ENCODE measurements at regions of chr12 and their contacts with region 1.

Region 1: GRCh38 chr12:105053116-105053572 is 31.1 kb downstream of the ALDH1L2 start:
- DNase-seq: peak; percentile 71 to 77 (median 75)
- H3K4me3 ChIP-seq: no peak overlapping the region
- H3K4me3 Mint-ChIP-seq: no peak overlapping the region
- H3K27ac ChIP-seq: no peak overlapping the region
- H3K27ac Mint-ChIP-seq: no peak overlapping the region
- H3K4me1 ChIP-seq: no peaks in the 10 kb centered on the region
- H3K4me1 Mint-ChIP-seq: peaks cover 0 to 3% (median under 1%) of the 10 kb centered on the region in 4 donors
- H3K27me3 ChIP-seq: no peaks in the 10 kb centered on the region
- H3K27me3 Mint-ChIP-seq: peaks cover 2 to 3% of the 10 kb centered on the region in 2 donors

Region 2: GRCh38 chr12:104215638-104216297 is 837.4 kb before region 1 on chr12 and contains the start of gene TXNRD1:
- CTCF ChIA-PET with region 1: interaction called, 3 read pairs
- POLR2A ChIA-PET with region 1: no interaction called
- intact Hi-C with region 1: loop called (anchors 2 kb)
- DNase-seq: peak; percentile 78 to 84 (median 82)
- H3K4me3 ChIP-seq: peak within 1 kb of the TSS in 1 of 2 donors; percentile 62
- H3K4me3 Mint-ChIP-seq: peak within 1 kb of the TSS; percentile 73 to 92 (median 86)
- H3K27ac ChIP-seq: peak within 1 kb of the TSS; percentile 57
- H3K27ac Mint-ChIP-seq: peak within 1 kb of the TSS; percentile 2 to 93 (median 84)
- H3K4me1 ChIP-seq: peaks cover 29% of the 10 kb centered on the region
- H3K4me1 Mint-ChIP-seq: peaks cover 18 to 38% (median 27%) of the 10 kb centered on the region in 4 donors
- H3K27me3 ChIP-seq: no peaks in the 10 kb centered on the region
- H3K27me3 Mint-ChIP-seq: no peaks in the 10 kb centered on the region
- total RNA-seq, gene TXNRD1: 57.6 to 64.5 TPM

Region 3: DNA sequence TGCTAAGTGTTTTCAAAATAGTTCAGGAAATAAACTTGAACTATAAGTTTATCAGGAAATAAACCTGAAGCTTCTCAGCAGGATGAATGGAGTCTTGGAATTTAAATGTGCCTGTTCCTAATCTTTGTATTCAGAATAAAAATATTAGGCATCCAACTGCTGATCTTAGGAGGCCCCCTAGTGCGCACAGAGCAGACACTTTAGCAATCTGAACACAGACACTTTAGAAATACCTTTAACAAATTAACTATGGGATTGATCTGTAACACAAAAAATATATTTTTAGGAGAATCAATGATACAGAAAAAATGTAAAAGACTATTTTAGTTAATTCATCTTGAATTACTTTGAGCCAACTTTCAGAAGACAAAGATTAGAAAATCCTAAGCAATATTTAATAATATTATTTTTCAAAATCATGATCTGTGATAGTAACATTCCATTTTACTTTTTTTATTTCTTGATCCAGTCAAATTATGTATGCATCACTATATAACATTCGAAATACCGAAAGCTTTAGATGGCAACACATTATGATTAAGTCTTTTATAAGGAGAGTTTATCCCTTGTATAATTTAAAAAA is 175.9 kb before region 1 on chr12:
- CTCF ChIA-PET with region 1: no interaction called
- POLR2A ChIA-PET with region 1: no interaction called
- intact Hi-C with region 1: loop called (anchors 1 kb)
- DNase-seq: peak in 4 of 5 donors; percentile 27 to 31 (median 30)
- H3K4me3 ChIP-seq: no peak overlapping the region
- H3K4me3 Mint-ChIP-seq: no peak overlapping the region
- H3K27ac ChIP-seq: no peak overlapping the region
- H3K27ac Mint-ChIP-seq: no peak overlapping the region
- H3K4me1 ChIP-seq: no peaks in the 10 kb centered on the region
- H3K4me1 Mint-ChIP-seq: peaks cover 0 to 2% (median 0%) of the 10 kb centered on the region in 4 donors
- H3K27me3 ChIP-seq: no peaks in the 10 kb centered on the region
- H3K27me3 Mint-ChIP-seq: no peaks in the 10 kb centered on the region

Region 4: GRCh38 chr12:104896146-104896545 is 157.0 kb before region 1 on chr12:
- CTCF ChIA-PET with region 1: no interaction called
- POLR2A ChIA-PET with region 1: no interaction called
- intact Hi-C with region 1: no loop called
- DNase-seq: no peak
- H3K4me3 ChIP-seq: no peak overlapping the region
- H3K4me3 Mint-ChIP-seq: no peak overlapping the region
- H3K27ac ChIP-seq: no peak overlapping the region
- H3K27ac Mint-ChIP-seq: no peak overlapping the region
- H3K4me1 ChIP-seq: no peaks in the 10 kb centered on the region
- H3K4me1 Mint-ChIP-seq: no peaks in the 10 kb centered on the region
- H3K27me3 ChIP-seq: no peaks in the 10 kb centered on the region
- H3K27me3 Mint-ChIP-seq: no peaks in the 10 kb centered on the region

Region 5: DNA sequence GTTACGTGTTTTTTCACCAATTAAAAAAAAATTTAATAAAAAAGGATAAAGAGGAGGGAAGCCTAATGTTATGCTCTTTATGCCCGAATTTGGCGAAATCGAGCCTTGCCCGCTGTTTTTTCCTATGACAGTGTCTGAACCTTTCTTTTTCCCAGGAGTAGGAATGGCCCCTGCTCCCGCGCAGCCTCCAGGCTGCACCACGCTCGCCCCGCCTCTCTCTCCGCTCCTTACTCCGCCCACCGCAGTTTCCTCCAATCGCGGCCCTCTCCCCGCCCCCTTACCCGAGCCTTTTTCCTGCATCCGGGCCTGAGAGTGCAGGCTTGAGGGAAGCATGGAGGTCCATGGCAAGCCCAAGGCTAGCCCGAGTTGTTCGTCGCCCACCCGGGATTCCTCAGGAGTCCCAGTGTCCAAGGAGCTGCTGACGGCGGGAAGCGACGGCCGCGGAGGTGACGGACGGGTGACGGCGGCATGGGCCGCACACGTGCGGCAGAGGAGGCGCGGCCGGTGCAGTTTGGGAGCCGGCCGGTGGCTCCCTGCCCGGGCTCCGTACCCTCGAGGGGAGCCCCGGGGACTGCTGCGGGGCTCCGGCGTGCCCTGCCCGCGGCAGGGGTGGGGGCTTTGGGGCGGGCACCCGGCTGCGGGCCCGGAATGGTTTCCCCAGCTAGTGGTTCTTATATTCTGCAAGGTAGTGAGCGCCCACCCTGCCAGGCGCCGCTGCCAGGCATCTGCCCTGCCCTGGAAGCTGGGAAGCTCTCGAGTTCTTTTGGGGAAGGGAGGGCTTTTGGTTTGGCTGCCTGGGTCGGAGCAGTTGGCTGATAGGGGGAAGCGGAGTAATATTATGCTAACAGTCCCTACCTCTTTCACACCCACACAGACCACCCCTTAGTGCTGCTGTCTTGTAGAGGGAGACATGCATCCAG is 66.9 kb before region 1 on chr12 and contains the start of gene NOPCHAP1:
- CTCF ChIA-PET with region 1: no interaction called
- POLR2A ChIA-PET with region 1: no interaction called
- intact Hi-C with region 1: loop called (anchors 2 kb)
- DNase-seq: peak; percentile 73 to 84 (median 79)
- H3K4me3 ChIP-seq: peak within 1 kb of the TSS; percentile 68 to 80
- H3K4me3 Mint-ChIP-seq: peak within 1 kb of the TSS; percentile 88 to 94 (median 92)
- H3K27ac ChIP-seq: peak within 1 kb of the TSS; percentile 64
- H3K27ac Mint-ChIP-seq: peak within 1 kb of the TSS; percentile 59 to 94 (median 86)
- H3K4me1 ChIP-seq: peaks cover 28% of the 10 kb centered on the region
- H3K4me1 Mint-ChIP-seq: peaks cover 21 to 43% (median 27%) of the 10 kb centered on the region in 4 donors
- H3K27me3 ChIP-seq: no peaks in the 10 kb centered on the region
- H3K27me3 Mint-ChIP-seq: no peaks in the 10 kb centered on the region
- total RNA-seq, gene NOPCHAP1: 15.7 to 16.2 TPM

Region 6: GRCh38 chr12:105064564-105065178 is 11.5 kb after region 1 on chr12:
- CTCF ChIA-PET with region 1: interaction called, 12 read pairs
- POLR2A ChIA-PET with region 1: no interaction called
- intact Hi-C with region 1: no loop called
- DNase-seq: no peak
- H3K4me3 ChIP-seq: no peak overlapping the region
- H3K4me3 Mint-ChIP-seq: no peak overlapping the region
- H3K27ac ChIP-seq: no peak overlapping the region
- H3K27ac Mint-ChIP-seq: no peak overlapping the region
- H3K4me1 ChIP-seq: no peaks in the 10 kb centered on the region
- H3K4me1 Mint-ChIP-seq: no peaks in the 10 kb centered on the region
- H3K27me3 ChIP-seq: no peaks in the 10 kb centered on the region
- H3K27me3 Mint-ChIP-seq: peaks cover 9 to 10% of the 10 kb centered on the region in 2 donors

Region 7: GRCh38 chr12:105171691-105172436 is 118.7 kb after region 1 on chr12:
- CTCF ChIA-PET with region 1: no interaction called
- POLR2A ChIA-PET with region 1: no interaction called
- intact Hi-C with region 1: no loop called
- DNase-seq: no peak
- H3K4me3 ChIP-seq: no peak overlapping the region
- H3K4me3 Mint-ChIP-seq: no peak overlapping the region
- H3K27ac ChIP-seq: no peak overlapping the region
- H3K27ac Mint-ChIP-seq: peak overlapping the region in 5 of 7 donors; percentile 8 to 73 (median 31)
- H3K4me1 ChIP-seq: no peaks in the 10 kb centered on the region
- H3K4me1 Mint-ChIP-seq: peaks cover 0 to 6% (median 0%) of the 10 kb centered on the region in 4 donors
- H3K27me3 ChIP-seq: no peaks in the 10 kb centered on the region
- H3K27me3 Mint-ChIP-seq: no peaks in the 10 kb centered on the region

Measured in CD4-positive, alpha-beta memory T cell (primary cell).